ENCODE measurements at regions of chr13 and their contacts with region 1.

Region 1: GRCh38 chr13:102913914-102914313 is 68.1 kb downstream of the ERCC5 start:
- DNase-seq: peak in 1 of 2 experiments; percentile 6
- H3K4me3 ChIP-seq: no peak overlapping the region
- H3K27ac ChIP-seq: no peak overlapping the region
- H3K4me1 ChIP-seq: peaks cover 50% of the 10 kb centered on the region
- H3K27me3 ChIP-seq: no peaks in the 10 kb centered on the region
- CTCF ChIP-seq: no peak

Region 2: GRCh38 chr13:102897371-102898138 is 16.4 kb before region 1 on chr13:
- CTCF ChIA-PET with region 1: no interaction called
- POLR2A ChIA-PET with region 1: no interaction called
- intact Hi-C with region 1: no loop called
- DNase-seq: no peak
- H3K4me3 ChIP-seq: no peak overlapping the region
- H3K27ac ChIP-seq: no peak overlapping the region
- H3K4me1 ChIP-seq: no peaks in the 10 kb centered on the region
- H3K27me3 ChIP-seq: no peaks in the 10 kb centered on the region
- CTCF ChIP-seq: no peak

Region 3: GRCh38 chr13:103282571-103283450 is 368.9 kb after region 1 on chr13:
- CTCF ChIA-PET with region 1: no interaction called
- POLR2A ChIA-PET with region 1: no interaction called
- intact Hi-C with region 1: loop called (anchors 2 kb)
- DNase-seq: peak; percentile 55 to 98
- H3K4me3 ChIP-seq: peak overlapping the region; percentile 36; the same call in 1 of the 2 replicates
- H3K27ac ChIP-seq: peak overlapping the region; percentile 98
- H3K4me1 ChIP-seq: peaks cover 17% of the 10 kb centered on the region
- H3K27me3 ChIP-seq: no peaks in the 10 kb centered on the region
- CTCF ChIP-seq: no peak

Region 4: DNA sequence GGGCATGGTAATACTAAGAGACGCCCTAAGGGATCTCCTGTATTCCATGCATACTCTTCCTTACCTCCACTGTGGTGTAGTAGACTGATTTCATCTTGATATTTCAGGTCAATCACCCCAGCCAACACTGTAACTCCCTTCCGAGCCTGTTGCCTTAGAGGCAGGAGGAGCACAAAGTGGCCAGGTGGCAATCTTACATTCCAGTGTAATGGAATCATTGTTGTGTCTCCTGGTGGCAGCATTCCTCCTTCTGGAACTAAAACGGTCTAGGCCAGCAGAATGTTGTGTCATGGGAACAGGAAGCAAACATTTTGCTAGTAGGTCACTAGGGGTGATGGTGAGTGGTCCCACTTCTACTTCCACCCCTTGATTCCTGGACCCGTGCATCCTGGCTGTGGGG is 558.0 kb after region 1 on chr13:
- CTCF ChIA-PET with region 1: no interaction called
- POLR2A ChIA-PET with region 1: no interaction called
- intact Hi-C with region 1: loop called (anchors 10 kb)
- DNase-seq: peak; percentile 68 to 84
- H3K4me3 ChIP-seq: no peak overlapping the region
- H3K27ac ChIP-seq: peak overlapping the region; percentile 31; the same call in 1 of the 2 replicates
- H3K4me1 ChIP-seq: peaks cover 30% of the 10 kb centered on the region
- H3K27me3 ChIP-seq: no peaks in the 10 kb centered on the region
- CTCF ChIP-seq: no peak

Region 5: DNA sequence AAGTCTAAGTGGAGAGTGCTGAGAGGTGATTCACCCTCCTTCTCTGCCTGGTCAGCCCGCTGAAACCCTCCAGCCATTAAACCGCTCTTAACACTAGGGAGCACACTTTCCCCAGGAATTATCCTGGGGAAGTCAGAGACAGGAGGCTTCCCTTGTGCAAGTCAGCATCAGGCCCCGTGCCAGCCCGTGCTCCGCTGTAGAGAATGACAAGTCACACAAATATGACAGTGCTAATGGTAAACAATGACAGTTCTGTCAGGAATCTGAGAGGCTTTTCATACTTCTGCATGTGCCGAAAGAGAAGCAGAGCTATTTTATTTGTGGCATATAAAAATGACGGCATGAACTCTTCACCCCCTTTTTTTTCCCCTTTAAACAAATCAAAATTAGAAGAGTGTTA is 969.2 kb after region 1 on chr13:
- CTCF ChIA-PET with region 1: no interaction called
- POLR2A ChIA-PET with region 1: no interaction called
- intact Hi-C with region 1: loop called (anchors 1 kb)
- DNase-seq: peak; percentile 91 to 98
- H3K4me3 ChIP-seq: no peak overlapping the region
- H3K27ac ChIP-seq: 0 out of 2 replicates have a peak overlapping the region, but pooled peaks have one; percentile 29
- H3K4me1 ChIP-seq: peaks cover 7% of the 10 kb centered on the region
- H3K27me3 ChIP-seq: no peaks in the 10 kb centered on the region
- CTCF ChIP-seq: peak; percentile 77